Gastrocnemius medialis (tissue), 4 donors: ENCODE measurements at regions of chr4 and their contacts with region 1.

Region 1: GRCh38 chr4:15001869-15002658 is at the start of gene CPEB2:
- DNase-seq: peak; percentile 88 to 95
- ATAC-seq: peak; percentile 62 to 69
- H3K4me3 ChIP-seq: peak within 1 kb of the TSS; percentile 71 to 92 (median 84)
- H3K27ac ChIP-seq: peak within 1 kb of the TSS; percentile 96 to 99 (median 98)
- H3K4me1 ChIP-seq: peaks cover 17 to 18% of the 10 kb centered on the region in 2 donors
- H3K27me3 ChIP-seq: no peaks in the 10 kb centered on the region
- CTCF ChIP-seq: no peak
- POLR2A ChIP-seq: peak; percentile 98 to 100
- total RNA-seq, gene CPEB2: 8.7 to 13.1 (median 10.1) TPM

Region 2: DNA sequence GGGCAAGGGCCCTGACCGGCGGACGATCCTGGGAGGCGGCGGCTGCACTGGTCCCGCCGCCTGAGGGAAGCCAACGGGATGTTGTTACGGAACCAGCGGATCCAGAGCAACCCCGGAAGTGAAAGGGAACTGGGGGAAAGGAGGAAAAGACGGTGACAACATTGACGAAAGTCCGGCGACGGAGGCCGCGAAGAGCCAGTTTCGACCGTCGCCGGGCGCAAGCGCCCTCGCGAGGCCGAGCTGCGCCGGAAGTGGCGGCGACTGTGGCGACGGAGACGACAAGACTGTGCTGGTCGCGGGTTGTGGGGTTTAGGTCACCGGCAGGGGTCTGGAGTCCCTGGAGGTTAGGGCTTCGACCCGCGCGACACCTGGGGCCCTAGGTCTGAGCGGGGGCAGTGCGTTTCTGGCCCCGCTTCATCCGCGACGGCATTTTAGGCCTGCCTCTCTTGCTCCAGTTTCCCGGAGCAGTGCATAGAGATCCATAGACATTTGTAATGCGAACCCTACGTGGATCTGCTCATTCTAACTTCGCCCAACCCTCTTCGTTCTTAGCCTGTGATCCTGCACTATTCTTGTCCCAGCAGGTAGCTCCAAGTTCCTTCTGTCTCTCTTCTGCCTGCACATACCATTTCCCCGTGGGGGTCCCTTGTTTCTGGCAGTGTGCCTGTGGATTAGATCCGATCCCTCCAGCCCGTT is 1374.3 kb before region 1 on chr4 and contains the start of gene BOD1L1:
- in situ Hi-C with region 1: loop called in 2 of 4 experiments (anchors 25 kb)
- intact Hi-C with region 1: no loop called
- DNase-seq: peak; percentile 84
- ATAC-seq: peak; percentile 99
- H3K4me3 ChIP-seq: peak within 1 kb of the TSS; percentile 72 to 95 (median 79)
- H3K27ac ChIP-seq: peak within 1 kb of the TSS; percentile 87 to 94 (median 88)
- H3K4me1 ChIP-seq: peaks cover 30 to 36% of the 10 kb centered on the region in 2 donors
- H3K27me3 ChIP-seq: no peaks in the 10 kb centered on the region
- CTCF ChIP-seq: peak in 4 of 5 experiments; percentile 28 to 57 (median 48)
- POLR2A ChIP-seq: peak; percentile 55 to 69
- total RNA-seq, gene BOD1L1: 11.9 to 14.7 (median 13.0) TPM

Region 3: DNA sequence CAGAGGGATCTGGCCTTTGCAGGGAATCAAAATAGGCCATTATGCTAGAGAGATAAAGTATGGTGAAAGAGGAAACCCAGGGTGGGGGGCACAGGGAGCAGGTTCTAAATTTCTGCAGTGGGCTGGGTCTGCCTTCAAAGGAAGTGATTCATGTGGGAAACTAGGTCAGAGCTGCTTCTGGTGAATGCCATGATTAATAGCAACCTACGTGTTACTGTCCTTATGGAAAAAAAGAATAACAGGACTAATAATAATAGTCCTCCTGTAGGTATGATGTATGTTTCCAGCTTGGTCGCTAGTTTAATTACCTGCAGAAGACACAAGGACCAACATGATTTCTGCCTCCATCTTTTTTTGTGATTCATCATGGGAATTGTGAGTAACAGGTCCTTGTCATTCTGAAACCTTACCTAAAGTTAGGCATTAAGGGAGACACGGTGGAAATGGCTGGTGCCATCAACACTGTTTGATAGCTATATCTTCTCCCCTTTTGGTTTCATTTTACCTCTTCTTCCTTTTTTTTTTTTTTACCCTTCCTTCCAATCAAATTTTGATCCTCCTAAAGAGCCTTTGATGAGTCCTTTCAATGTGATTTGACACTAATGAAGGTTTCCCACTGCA is 180.6 kb after region 1 on chr4:
- in situ Hi-C with region 1: no loop called
- intact Hi-C with region 1: no loop called
- DNase-seq: no peak
- ATAC-seq: no peak
- H3K4me3 ChIP-seq: no peak overlapping the region
- H3K27ac ChIP-seq: no peak overlapping the region
- H3K4me1 ChIP-seq: no peaks in the 10 kb centered on the region
- H3K27me3 ChIP-seq: no peaks in the 10 kb centered on the region
- CTCF ChIP-seq: no peak
- POLR2A ChIP-seq: no peak

Region 4: GRCh38 chr4:15649914-15650545 is 648.0 kb after region 1 on chr4:
- in situ Hi-C with region 1: loop called in 3 of 4 experiments (anchors 10 to 25 kb)
- intact Hi-C with region 1: loop called (anchors 2 kb)
- DNase-seq: peak; percentile 18 to 55
- ATAC-seq: peak; percentile 76 to 84
- H3K4me3 ChIP-seq: peak overlapping the region in 1 of 4 donors; percentile 2
- H3K27ac ChIP-seq: peak overlapping the region; percentile 11 to 99 (median 30)
- H3K4me1 ChIP-seq: peaks cover 64 to 68% of the 10 kb centered on the region in 2 donors
- H3K27me3 ChIP-seq: no peaks in the 10 kb centered on the region
- CTCF ChIP-seq: peak; percentile 44 to 78 (median 74)
- POLR2A ChIP-seq: no peak

Region 5: DNA sequence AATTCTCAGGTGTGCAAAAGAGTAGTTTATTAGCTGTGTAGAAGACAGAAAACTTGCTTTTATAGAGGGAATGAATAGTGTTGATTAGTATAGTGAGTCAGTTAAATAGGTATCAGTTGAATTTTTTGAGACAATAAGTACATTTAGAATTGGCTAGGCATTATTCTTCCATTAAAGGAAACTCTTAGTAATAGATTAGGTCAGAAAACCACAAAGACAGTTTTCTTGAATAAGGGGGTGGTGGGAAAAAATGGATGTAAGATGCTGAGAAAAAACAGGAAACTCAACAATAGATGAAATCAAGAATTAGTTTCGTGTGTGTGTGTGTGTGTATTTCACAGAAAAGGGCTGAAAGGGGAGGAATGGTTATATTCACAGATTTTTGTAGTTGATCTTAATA is 792.8 kb after region 1 on chr4:
- in situ Hi-C with region 1: no loop called
- intact Hi-C with region 1: loop called (anchors 5 kb)
- DNase-seq: no peak
- ATAC-seq: no peak
- H3K4me3 ChIP-seq: no peak overlapping the region
- H3K27ac ChIP-seq: no peak overlapping the region
- H3K4me1 ChIP-seq: peaks cover 5 to 24% of the 10 kb centered on the region in 2 donors
- H3K27me3 ChIP-seq: no peaks in the 10 kb centered on the region
- CTCF ChIP-seq: no peak
- POLR2A ChIP-seq: no peak

Region 6: DNA sequence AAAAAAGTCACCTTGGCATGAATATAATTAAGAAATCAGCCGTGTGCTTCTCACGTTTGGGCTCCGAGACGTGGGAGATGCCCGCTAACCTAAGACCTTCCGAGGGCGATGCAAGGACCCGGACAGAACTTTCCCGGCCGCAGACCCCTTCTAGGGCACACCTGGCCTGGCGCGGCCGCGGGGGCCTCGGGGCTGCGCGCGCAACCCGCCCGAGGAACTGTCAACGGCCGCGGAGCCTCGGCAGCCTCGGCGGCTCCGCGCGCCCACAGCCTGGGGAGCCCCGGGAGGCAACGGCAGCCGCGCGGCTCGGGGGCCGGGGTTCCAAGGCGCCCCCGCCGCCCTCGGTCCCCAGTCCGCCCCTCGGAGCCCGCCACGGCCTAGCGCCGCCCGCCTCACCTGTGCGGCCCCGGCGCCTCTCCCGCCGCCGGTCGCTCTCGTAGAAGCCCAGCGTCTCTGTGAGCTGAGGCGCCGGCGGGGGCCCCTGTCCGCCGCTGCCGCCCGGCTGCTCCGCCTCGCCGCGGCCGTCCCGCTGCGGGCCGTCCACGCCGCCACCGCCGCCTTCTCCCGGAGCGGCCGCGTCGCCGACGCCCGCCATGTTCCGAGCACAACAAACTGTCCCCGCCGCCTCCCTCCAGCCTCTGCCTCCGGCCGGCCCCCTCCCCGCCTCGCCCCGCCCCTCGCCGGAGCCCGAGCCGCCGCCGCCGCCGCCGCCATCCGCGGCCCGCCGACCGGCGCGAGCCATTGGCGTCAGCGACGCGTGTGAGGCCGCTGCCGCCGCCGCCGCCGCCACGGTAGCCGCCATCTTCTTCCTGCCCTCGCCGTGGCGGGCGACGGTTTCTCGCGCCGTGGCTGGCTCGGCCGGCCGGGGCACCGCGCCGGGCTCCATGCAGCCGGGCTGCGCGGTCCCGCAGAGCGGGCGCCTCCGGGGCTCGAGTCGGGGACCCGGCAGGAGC is 1224.1 kb after region 1 on chr4 and contains the start of gene TAPT1:
- in situ Hi-C with region 1: loop called in 1 of 4 experiments (anchors 25 kb)
- intact Hi-C with region 1: loop called (anchors 5 kb)
- DNase-seq: peak; percentile 81 to 84
- ATAC-seq: peak; percentile 73 to 80
- H3K4me3 ChIP-seq: peak within 1 kb of the TSS; percentile 77 to 86 (median 78)
- H3K27ac ChIP-seq: peak within 1 kb of the TSS; percentile 94 to 98 (median 96)
- H3K4me1 ChIP-seq: peaks cover 53 to 55% of the 10 kb centered on the region in 2 donors
- H3K27me3 ChIP-seq: no peaks in the 10 kb centered on the region
- CTCF ChIP-seq: no peak
- POLR2A ChIP-seq: peak; percentile 76 to 80
- total RNA-seq, gene TAPT1: 29.5 to 44.1 (median 40.8) TPM